ENCODE measurements at regions of chr2 and their contacts with region 1.

Region 1: DNA sequence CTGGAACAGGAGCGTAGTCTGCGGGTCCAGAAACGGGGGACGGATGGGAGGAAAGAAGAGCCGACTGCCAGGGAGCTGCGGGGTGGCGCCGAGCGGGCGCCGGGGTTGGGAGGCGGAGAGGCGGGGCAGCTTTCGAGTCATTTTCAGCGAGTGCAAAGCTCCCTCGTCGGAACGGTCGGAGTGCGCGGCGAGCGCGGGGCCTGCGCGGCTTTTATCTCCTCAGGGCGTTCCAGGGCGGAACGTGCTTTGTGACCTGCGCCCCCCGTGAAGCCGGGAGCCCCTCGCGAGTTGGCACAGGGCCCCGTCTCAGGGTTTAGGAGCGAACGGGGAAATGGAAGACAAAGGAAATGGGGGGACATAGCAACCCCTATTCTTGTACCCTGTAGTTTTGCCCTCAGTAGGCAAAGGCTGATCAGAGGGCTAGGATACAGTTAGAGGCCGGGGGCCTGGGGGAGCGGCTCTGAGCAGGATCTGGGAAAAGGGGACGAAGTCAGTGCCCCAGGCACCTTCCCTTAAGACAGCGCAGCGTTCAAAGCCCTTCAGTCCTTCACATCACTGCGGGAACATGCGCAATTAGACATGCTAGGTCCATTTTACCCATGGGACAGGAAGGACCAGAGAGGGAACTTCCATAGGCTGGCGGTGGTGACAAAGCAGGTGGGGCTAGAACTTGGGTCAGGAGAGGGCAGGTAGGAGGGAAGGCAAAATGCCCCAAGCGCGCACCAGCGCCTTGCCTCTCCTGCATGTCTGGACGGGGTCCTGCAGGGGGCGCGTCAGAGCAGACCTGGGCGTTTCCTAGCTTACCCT is 60.1 kb upstream of the IL1RL1 start:
- DNase-seq: peak in 6 of 7 donors; percentile 55 to 76 (median 64)
- H3K4me3 ChIP-seq: peak overlapping the region in 2 of 4 donors; percentile 10 to 45
- H3K27ac ChIP-seq: no peak overlapping the region
- H3K4me1 ChIP-seq: peaks cover 3 to 10% of the 10 kb centered on the region in 2 donors
- H3K27me3 ChIP-seq: no peaks in the 10 kb centered on the region
- CTCF ChIP-seq: peak; percentile 37 to 70 (median 64)
- POLR2A ChIP-seq: no peak

Region 2: GRCh38 chr2:102342891-102343290 is 91.6 kb after region 1 on chr2:
- intact Hi-C with region 1: loop called in 1 of 2 experiments (anchors 10 kb)
- DNase-seq: no peak
- H3K4me3 ChIP-seq: no peak overlapping the region
- H3K27ac ChIP-seq: no peak overlapping the region
- H3K4me1 ChIP-seq: no peaks in the 10 kb centered on the region
- H3K27me3 ChIP-seq: peaks cover 18% of the 10 kb centered on the region
- CTCF ChIP-seq: peak in 1 of 6 experiments; percentile 24
- POLR2A ChIP-seq: no peak

Region 3: GRCh38 chr2:102350137-102350793 is 99.0 kb after region 1 on chr2:
- intact Hi-C with region 1: loop called (anchors 5 to 10 kb)
- DNase-seq: no peak
- H3K4me3 ChIP-seq: no peak overlapping the region
- H3K27ac ChIP-seq: no peak overlapping the region
- H3K4me1 ChIP-seq: peaks cover 0 to under 1% of the 10 kb centered on the region in 2 donors
- H3K27me3 ChIP-seq: peaks cover 6% of the 10 kb centered on the region
- CTCF ChIP-seq: no peak
- POLR2A ChIP-seq: no peak

Region 4: GRCh38 chr2:102449370-102449974 is 198.2 kb after region 1 on chr2:
- intact Hi-C with region 1: loop called (anchors 5 to 10 kb)
- DNase-seq: peak; percentile 32 to 68 (median 43)
- H3K4me3 ChIP-seq: no peak overlapping the region
- H3K27ac ChIP-seq: no peak overlapping the region
- H3K4me1 ChIP-seq: no peaks in the 10 kb centered on the region
- H3K27me3 ChIP-seq: peaks cover 2% of the 10 kb centered on the region
- CTCF ChIP-seq: peak; percentile 45 to 70 (median 58)
- POLR2A ChIP-seq: no peak